Head of caudate nucleus (tissue), 42 donors: ENCODE measurements at regions of chr12 and their contacts with region 1.

Region 1: GRCh38 chr12:48542300-48542928 is 17.0 kb downstream of the OR8S1 start:
- DNase-seq: peak in 37 of 42 donors; percentile 8 to 83 (median 42)

Region 2: DNA sequence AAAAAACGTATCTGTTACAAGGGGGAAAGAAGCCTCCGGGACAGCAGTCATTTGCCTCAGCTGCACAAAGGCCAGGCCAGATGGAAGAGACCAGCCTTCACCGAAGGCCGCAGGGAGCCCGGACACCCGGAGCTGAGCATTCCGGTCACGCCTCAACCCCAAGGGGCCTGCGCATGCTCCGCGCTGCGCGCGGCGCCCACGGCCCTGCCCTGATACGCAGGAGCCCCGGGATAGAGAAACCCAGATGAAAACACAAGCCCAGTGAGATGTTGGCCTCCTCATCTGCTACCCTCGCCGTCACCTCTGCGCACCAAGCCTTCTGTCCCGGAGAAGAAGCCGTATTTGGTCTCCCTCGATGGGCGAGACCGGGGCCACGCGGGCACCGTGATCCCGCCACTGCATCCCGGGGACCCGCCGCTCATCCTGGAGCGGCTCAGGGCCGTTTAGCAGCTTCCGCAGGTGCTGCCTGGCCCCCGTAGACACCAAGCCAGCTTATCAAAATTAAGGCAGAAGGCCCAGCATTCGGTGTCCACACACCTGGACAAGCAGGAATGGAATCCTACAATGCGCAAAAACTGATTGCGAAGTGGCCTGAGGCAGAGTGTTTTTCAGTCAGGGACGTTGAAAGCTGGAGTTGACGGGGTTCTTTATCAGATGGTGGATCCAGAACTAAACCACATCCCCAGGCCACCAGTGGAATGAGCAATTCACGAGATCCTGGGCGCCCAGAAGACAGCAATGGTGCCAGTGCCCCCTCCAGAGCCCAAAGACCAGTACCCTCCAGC is 14.3 kb before region 1 on chr12:
- intact Hi-C with region 1: no loop called
- DNase-seq: no peak

Region 3: GRCh38 chr12:48580831-48581230 is 38.4 kb after region 1 on chr12:
- intact Hi-C with region 1: no loop called
- DNase-seq: no peak

Region 4: GRCh38 chr12:48618541-48618940 is 76.1 kb after region 1 on chr12:
- intact Hi-C with region 1: loop called (anchors 5 kb)
- DNase-seq: peak; percentile 55 to 92 (median 80)

Region 5: GRCh38 chr12:48681416-48681737 is 139.0 kb after region 1 on chr12:
- intact Hi-C with region 1: no loop called
- DNase-seq: no peak